Vagina (tissue), 2 donors: ENCODE measurements at regions of chr7 and their contacts with region 1.

Region 1: DNA sequence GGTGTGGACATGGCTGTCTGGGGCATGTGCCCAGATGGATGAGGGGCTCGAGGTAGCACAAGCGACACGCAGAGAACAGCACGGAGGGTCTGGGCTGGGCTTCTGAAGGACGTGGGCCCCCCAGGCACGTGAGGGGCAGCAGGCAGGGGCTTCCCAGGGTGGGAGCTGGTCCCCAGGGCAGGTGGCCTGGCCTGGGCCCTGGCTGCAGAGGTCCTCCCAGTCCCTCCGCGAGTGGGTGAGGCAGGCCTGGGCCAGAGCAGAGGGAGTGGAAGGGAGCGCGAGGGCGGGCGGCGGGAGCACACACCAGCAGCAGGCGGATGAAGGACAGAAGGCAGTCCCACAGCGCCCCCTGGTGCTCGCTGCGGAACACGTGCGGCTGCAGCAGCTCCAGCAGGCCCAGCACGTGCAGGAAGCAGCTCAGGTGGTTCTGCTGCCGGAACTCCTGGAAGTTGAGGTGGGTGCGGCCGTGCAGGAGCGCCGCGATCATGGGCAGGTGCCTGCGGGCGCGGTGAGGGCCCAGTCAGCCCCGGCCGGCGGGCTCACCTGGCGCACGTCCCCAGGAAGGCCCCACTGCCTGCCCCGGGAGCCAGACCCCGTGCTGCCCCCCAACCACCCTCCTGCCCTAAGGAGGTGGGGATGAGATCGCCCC is 14.7 kb upstream of the MICALL2 start:
- DNase-seq: no peak
- H3K4me3 ChIP-seq: no peak overlapping the region
- H3K27ac ChIP-seq: no peak overlapping the region
- H3K4me1 ChIP-seq: peaks cover 11% of the 10 kb centered on the region
- H3K27me3 ChIP-seq: no peaks in the 10 kb centered on the region
- CTCF ChIP-seq: peak; percentile 58 to 90 (median 76)
- POLR2A ChIP-seq: no peak

Region 2: GRCh38 chr7:1225441-1226185 is 248.4 kb before region 1 on chr7:
- intact Hi-C with region 1: loop called (anchors 5 kb)
- DNase-seq: no peak
- H3K4me3 ChIP-seq: no peak overlapping the region
- H3K27ac ChIP-seq: no peak overlapping the region
- H3K4me1 ChIP-seq: peaks cover 10% of the 10 kb centered on the region
- H3K27me3 ChIP-seq: peaks cover 38% of the 10 kb centered on the region
- CTCF ChIP-seq: peak; percentile 34 to 57 (median 53)
- POLR2A ChIP-seq: no peak

Region 3: DNA sequence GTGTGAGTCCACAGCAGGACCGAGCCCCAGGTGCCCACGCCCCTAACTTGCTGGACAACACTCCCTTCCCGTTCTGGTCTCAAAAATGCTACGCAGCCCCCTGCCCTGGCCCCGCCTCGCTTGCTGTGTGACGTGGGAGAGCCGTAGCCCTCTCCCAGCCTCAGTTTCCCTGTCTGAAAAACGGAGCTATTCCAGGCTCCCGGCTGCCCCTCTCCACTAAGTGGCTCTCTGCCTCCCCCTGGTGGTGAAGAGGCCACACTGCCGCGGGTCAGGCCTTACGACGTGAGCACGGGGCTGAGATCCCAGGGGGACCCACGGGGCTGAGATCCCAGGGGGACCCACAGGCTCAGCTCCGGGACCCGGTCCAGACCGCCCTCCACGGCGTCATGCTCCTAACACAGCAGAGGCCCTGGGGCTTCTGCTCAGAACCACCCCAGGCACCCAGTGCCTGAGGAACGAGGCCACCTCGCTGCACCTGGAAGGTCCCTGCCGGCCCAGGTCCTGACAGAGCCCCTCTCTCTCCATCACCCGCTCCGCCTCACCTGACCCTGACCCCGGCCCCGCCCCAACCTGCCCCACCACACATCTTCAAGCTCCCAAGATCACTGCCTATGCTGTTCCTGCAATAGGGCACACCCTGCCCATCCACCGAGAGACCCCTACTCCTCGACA is 41.4 kb before region 1 on chr7:
- intact Hi-C with region 1: loop called (anchors 1 kb)
- DNase-seq: no peak
- H3K4me3 ChIP-seq: no peak overlapping the region
- H3K27ac ChIP-seq: no peak overlapping the region
- H3K4me1 ChIP-seq: peaks cover 12% of the 10 kb centered on the region
- H3K27me3 ChIP-seq: no peaks in the 10 kb centered on the region
- CTCF ChIP-seq: peak; percentile 84 to 88 (median 88)
- POLR2A ChIP-seq: no peak